ENCODE measurements at regions of chr10 and their contacts with region 1.

Region 1: GRCh38 chr10:58384999-58385783 is at the start of gene TFAM:
- DNase-seq: peak; percentile 92
- H3K4me3 Mint-ChIP-seq: peak within 1 kb of the TSS; percentile 99
- H3K27ac Mint-ChIP-seq: peak within 1 kb of the TSS; percentile 98
- H3K4me1 Mint-ChIP-seq: peaks cover 37% of the 10 kb centered on the region
- H3K27me3 Mint-ChIP-seq: peaks cover 6% of the 10 kb centered on the region
- total RNA-seq, gene TFAM: 85.0 and 86.6 TPM in 2 replicates

Region 2: DNA sequence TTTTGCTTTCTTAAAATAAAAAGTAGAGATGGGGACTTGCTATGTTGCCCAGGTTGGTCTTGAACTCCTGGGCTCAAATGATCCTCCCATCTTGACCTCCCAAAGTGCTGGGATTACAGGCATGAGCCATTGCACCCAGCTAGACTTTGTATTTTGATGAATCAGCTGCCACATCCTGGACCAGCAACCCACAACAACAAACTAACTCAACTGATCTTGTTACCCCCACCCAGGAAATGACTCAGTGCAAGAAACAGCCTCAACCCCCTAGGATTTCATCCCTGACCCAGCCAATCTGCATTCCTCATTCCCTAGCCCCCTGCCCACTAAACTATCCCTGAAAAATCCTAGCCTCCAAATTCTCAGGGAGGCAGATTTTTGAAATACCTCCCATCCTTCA is 241.2 kb before region 1 on chr10:
- intact Hi-C with region 1: no loop called
- DNase-seq: no peak
- H3K4me3 Mint-ChIP-seq: no peak overlapping the region
- H3K27ac Mint-ChIP-seq: no peak overlapping the region
- H3K4me1 Mint-ChIP-seq: peaks cover 8% of the 10 kb centered on the region
- H3K27me3 Mint-ChIP-seq: no peaks in the 10 kb centered on the region

Region 3: DNA sequence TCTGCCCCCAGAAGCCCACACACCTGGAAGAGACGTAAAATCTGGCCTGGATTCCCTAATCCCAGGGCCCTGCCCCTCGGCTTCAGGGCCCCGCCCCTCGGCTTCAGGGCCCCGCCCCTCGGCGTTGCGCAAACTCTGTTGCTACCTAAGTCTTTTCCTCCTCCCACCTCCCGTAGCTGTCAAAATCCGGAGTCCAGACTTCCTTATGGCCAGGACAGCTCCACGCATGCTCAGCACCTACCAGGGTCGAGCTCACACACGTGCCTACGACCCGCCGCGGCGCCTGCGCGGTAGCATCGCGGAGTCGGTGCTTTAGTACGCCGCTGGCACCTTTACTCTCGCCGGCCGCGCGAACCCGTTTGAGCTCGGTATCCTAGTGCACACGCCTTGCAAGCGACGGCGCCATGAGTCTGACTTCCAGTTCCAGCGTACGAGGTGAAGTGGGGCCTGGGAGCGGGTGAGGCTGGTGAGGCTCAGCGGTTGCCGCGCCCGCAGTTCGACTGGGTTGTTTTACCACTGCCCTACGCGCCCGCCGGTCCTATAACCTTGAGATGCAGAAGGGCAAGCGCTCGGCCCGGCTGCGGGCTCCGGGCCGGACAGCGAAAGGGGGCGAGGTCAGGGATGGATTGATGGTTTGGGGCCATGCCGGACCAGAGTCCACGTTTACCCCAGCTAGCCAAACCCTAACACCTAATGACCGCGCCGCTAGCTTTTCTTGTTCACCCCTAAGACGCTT is 116.2 kb before region 1 on chr10 and contains the start of gene CISD1:
- intact Hi-C with region 1: loop called (anchors 1 kb)
- DNase-seq: peak; percentile 94
- H3K4me3 Mint-ChIP-seq: peak within 1 kb of the TSS; percentile 90
- H3K27ac Mint-ChIP-seq: peak within 1 kb of the TSS; percentile 95
- H3K4me1 Mint-ChIP-seq: peaks cover 20% of the 10 kb centered on the region
- H3K27me3 Mint-ChIP-seq: no peaks in the 10 kb centered on the region
- total RNA-seq, gene CISD1: 39.7 and 43.2 TPM in 2 replicates

Region 4: GRCh38 chr10:58299580-58299979 is 85.6 kb before region 1 on chr10:
- intact Hi-C with region 1: loop called (anchors 1 kb)
- DNase-seq: peak; percentile 12
- H3K4me3 Mint-ChIP-seq: no peak overlapping the region
- H3K27ac Mint-ChIP-seq: no peak overlapping the region
- H3K4me1 Mint-ChIP-seq: peaks cover 2% of the 10 kb centered on the region
- H3K27me3 Mint-ChIP-seq: peaks cover 11% of the 10 kb centered on the region

Region 5: DNA sequence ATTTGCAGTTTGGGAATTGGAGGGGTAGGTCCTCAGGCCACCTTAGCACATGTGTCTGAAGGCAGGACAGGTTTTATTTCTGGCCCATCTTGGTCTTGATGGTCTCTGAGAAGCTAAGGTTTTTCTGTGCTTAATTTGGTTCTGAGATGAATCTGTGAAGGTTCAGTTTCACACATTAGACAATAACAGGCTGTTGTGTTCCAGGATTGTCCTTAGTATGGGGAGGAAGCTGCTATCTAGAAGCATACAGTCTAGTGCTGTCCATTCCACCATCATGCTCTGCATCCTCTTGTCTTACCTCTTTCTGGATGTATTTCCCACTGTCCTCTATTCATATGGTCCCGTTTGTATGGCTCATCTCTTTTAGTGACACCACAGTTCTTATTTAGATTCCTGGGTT is 43.2 kb before region 1 on chr10:
- intact Hi-C with region 1: no loop called
- DNase-seq: no peak
- H3K4me3 Mint-ChIP-seq: no peak overlapping the region
- H3K27ac Mint-ChIP-seq: no peak overlapping the region
- H3K4me1 Mint-ChIP-seq: peaks cover 19% of the 10 kb centered on the region
- H3K27me3 Mint-ChIP-seq: no peaks in the 10 kb centered on the region

Region 6: DNA sequence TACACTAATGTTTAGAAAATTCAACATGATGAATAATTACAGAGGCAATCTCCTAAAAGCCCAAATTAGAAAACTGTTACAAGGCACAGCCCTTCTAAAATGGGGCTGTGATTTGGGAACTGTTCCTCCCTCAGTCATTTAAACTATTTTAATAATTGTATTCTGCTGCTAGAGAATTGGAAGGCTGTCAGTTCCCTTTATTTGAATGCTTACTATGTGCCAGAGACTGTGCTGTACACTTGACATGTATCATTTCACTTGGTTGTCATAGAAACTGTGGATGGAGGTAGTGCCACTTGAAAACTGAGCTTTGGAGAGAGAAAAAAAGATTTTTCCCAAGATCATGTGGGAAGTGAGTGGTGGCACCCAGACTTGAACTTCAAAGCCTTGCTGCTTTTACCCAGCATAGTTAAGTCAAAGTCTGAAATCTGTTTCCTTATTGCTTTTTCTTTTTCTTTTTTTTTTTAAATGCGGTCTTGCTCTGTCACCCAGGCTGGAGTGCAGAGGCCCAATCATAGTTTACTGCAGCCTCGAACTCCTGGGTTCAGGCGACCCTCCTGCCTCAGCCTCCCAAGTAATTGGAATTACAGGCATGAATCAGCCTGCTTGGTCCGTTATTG is 26.8 kb before region 1 on chr10:
- intact Hi-C with region 1: loop called (anchors 2 kb)
- DNase-seq: no peak
- H3K4me3 Mint-ChIP-seq: no peak overlapping the region
- H3K27ac Mint-ChIP-seq: no peak overlapping the region
- H3K4me1 Mint-ChIP-seq: peaks cover 12% of the 10 kb centered on the region
- H3K27me3 Mint-ChIP-seq: no peaks in the 10 kb centered on the region

Region 7: DNA sequence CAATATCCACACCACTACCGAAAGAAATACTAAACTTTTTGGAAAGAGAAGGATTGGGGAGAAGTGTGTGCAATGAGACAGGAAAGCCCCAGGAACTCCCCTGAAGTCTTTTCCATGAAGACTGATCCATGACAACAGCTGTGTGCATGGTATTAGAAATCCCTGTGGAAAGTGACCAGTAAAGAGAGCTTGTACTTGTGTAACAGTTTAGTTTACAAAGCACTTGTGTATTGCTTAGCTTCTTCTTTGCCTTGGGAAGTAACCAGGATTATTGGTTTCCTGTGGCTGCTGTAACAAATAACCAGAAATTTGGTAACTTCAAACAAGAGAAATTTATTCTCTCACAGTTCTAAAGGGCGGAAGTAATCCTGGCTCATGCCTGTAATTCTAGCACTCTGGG is 18.8 kb after region 1 on chr10:
- intact Hi-C with region 1: no loop called
- DNase-seq: no peak
- H3K4me3 Mint-ChIP-seq: no peak overlapping the region
- H3K27ac Mint-ChIP-seq: no peak overlapping the region
- H3K4me1 Mint-ChIP-seq: no peaks in the 10 kb centered on the region
- H3K27me3 Mint-ChIP-seq: no peaks in the 10 kb centered on the region